Right cardiac atrium (tissue), 5 donors: ENCODE measurements at regions of chr13 and their contacts with region 1.

Region 1: DNA sequence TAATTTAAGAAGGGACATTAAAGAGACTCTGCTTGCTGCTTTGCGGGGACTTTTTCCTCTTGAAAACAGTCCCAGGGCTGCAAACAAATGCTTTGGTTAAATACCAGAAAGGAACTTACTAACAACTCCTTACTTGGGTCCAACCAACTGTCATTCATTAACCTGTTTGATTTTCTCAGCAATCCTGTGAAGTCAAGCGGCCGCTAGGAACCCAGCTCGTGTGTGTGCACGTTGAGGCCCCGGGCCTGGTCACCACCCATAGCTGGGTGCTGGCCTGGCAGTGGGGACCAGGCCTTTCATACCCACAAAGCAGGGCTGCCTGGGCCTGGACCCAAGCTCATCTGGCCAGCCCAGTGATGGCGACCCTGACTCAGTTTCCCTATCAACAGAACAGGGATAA is 50.7 kb downstream of the C1QTNF9 start:
- DNase-seq: no peak
- ATAC-seq: no peak
- H3K4me3 ChIP-seq: no peak overlapping the region
- H3K27ac ChIP-seq: no peak overlapping the region
- H3K4me1 ChIP-seq: no peaks in the 10 kb centered on the region
- H3K27me3 ChIP-seq: no peaks in the 10 kb centered on the region

Region 2: GRCh38 chr13:22944378-22944777 is 1415.7 kb before region 1 on chr13:
- intact Hi-C with region 1: loop called in 1 of 4 experiments (anchors 10 kb)
- DNase-seq: no peak
- ATAC-seq: peak in 1 of 2 donors; percentile 28
- H3K4me3 ChIP-seq: no peak overlapping the region
- H3K27ac ChIP-seq: no peak overlapping the region
- H3K4me1 ChIP-seq: no peaks in the 10 kb centered on the region
- H3K27me3 ChIP-seq: no peaks in the 10 kb centered on the region

Region 3: DNA sequence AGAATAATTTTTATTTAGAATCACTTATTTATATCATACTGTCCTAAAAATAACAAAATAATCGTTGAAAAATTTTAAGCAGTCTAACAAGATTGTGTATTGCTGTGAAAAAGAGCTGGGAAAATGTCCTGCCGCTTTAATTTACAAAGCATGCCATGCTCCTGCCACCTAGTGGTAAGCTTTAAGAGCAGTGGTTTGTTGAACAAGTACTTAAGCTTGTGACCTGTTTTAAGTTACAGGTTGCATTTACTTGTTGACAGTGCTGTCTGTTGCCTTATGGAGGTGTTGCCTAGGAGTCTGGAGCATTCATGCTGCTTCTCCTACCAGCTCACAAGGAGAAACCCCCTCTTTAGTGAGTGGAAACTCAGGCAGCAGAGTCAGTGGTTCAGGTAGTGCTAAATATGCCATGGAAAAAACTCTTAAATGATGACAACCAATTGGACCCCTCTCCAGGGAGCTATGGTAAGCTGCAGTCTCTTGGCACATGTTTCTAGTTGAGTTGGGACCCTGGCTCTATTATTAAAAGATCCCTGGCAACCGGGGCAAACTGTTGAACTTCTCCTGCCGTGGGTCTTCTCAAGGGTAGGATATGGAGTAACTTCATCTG is 131.2 kb before region 1 on chr13:
- intact Hi-C with region 1: no loop called
- DNase-seq: no peak
- ATAC-seq: peak in 1 of 2 donors; percentile 15
- H3K4me3 ChIP-seq: no peak overlapping the region
- H3K27ac ChIP-seq: no peak overlapping the region
- H3K4me1 ChIP-seq: no peaks in the 10 kb centered on the region
- H3K27me3 ChIP-seq: no peaks in the 10 kb centered on the region